Endothelial cell of umbilical vein (primary cell): ENCODE measurements at regions of chr3 and their contacts with region 1.

Region 1: GRCh38 chr3:157606011-157606851 is 103.0 kb upstream of the VEPH1 start:
- DNase-seq: peak; percentile 73
- H3K4me3 ChIP-seq: no peak overlapping the region
- H3K27ac ChIP-seq: no peak overlapping the region
- H3K4me1 ChIP-seq: no peaks in the 10 kb centered on the region
- H3K27me3 ChIP-seq: no peaks in the 10 kb centered on the region
- CTCF ChIP-seq: peak; percentile 85 to 86
- POLR2A ChIP-seq: no peak

Region 2: DNA sequence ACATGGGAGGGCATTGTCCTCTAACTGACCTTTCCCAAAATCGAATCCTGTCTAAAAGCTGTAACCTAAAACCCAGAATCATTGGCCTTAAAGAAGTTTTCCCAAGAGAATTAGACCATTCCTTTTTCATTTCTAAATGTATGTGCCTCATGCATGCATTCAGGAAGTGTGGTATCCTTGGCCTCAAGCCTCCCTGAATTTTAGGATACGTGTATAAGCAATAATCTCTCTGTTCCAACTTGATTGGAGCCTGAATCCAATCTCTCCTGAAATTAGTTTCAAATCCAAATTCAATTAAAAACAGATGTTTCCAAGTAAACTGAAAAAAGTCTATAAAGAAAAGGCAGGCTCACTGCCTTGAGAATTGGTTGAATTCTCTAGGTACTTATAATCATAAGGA is 17.0 kb before region 1 on chr3:
- CTCF ChIA-PET with region 1: interaction called, 11 read pairs
- POLR2A ChIA-PET with region 1: no interaction called
- dilution Hi-C with region 1: no loop called
- intact Hi-C with region 1: no loop called
- DNase-seq: no peak
- H3K4me3 ChIP-seq: no peak overlapping the region
- H3K27ac ChIP-seq: no peak overlapping the region
- H3K4me1 ChIP-seq: no peaks in the 10 kb centered on the region
- H3K27me3 ChIP-seq: peaks cover 2 to 14% of the 10 kb centered on the region in 2 experiments
- CTCF ChIP-seq: no peak
- POLR2A ChIP-seq: no peak

Region 3: GRCh38 chr3:157618075-157618760 is 12.0 kb after region 1 on chr3:
- CTCF ChIA-PET with region 1: interaction called, 38 read pairs
- POLR2A ChIA-PET with region 1: no interaction called
- dilution Hi-C with region 1: no loop called
- intact Hi-C with region 1: no loop called
- DNase-seq: peak; percentile 66
- H3K4me3 ChIP-seq: no peak overlapping the region
- H3K27ac ChIP-seq: no peak overlapping the region
- H3K4me1 ChIP-seq: peaks cover 3% of the 10 kb centered on the region
- H3K27me3 ChIP-seq: peaks cover 2 to 44% of the 10 kb centered on the region in 2 experiments
- CTCF ChIP-seq: peak; percentile 38 to 45
- POLR2A ChIP-seq: no peak

Region 4: GRCh38 chr3:158434412-158435038 is 828.3 kb after region 1 on chr3:
- CTCF ChIA-PET with region 1: interaction called, 48 read pairs
- POLR2A ChIA-PET with region 1: no interaction called
- dilution Hi-C with region 1: no loop called
- intact Hi-C with region 1: loop called (anchors 2 kb)
- DNase-seq: peak; percentile 77
- H3K4me3 ChIP-seq: no peak overlapping the region
- H3K27ac ChIP-seq: no peak overlapping the region
- H3K4me1 ChIP-seq: no peaks in the 10 kb centered on the region
- H3K27me3 ChIP-seq: no peaks in the 10 kb centered on the region
- CTCF ChIP-seq: peak; percentile 44 to 55
- POLR2A ChIP-seq: no peak

Region 5: DNA sequence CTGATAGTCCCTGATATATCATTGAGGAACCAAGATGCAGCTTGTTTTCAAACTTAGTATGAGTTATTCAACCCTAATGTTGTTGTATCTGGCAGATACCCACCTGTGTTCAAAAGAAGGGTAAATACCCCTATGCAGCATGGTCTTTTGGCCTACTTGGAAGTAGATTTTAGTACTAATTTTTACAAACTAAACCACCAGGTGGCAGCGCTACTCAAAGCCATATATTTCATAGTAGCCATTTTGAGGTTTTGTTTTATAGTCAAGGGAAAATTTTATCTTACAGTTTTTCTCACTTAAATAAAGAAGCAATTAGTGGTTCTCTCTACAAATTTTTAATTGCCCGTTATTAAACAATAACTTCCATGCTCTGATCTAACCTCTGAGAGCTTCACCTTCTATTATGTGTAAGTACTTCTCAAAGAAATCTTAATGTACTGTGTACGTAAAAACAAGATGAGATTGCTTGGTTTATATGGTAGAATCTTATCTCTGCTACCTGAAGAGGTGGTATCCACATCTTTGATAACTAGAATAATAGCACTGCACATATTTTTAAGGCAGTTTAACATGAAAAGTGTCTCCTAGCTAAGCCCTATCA is 933.3 kb after region 1 on chr3:
- CTCF ChIA-PET with region 1: interaction called, 25 read pairs
- POLR2A ChIA-PET with region 1: no interaction called
- dilution Hi-C with region 1: no loop called
- intact Hi-C with region 1: no loop called
- DNase-seq: peak; percentile 70
- H3K4me3 ChIP-seq: no peak overlapping the region
- H3K27ac ChIP-seq: no peak overlapping the region
- H3K4me1 ChIP-seq: no peaks in the 10 kb centered on the region
- H3K27me3 ChIP-seq: no peaks in the 10 kb centered on the region
- CTCF ChIP-seq: peak; percentile 37 to 41
- POLR2A ChIP-seq: no peak